ENCODE measurements at regions of chr6 and their contacts with region 1.

Region 1: DNA sequence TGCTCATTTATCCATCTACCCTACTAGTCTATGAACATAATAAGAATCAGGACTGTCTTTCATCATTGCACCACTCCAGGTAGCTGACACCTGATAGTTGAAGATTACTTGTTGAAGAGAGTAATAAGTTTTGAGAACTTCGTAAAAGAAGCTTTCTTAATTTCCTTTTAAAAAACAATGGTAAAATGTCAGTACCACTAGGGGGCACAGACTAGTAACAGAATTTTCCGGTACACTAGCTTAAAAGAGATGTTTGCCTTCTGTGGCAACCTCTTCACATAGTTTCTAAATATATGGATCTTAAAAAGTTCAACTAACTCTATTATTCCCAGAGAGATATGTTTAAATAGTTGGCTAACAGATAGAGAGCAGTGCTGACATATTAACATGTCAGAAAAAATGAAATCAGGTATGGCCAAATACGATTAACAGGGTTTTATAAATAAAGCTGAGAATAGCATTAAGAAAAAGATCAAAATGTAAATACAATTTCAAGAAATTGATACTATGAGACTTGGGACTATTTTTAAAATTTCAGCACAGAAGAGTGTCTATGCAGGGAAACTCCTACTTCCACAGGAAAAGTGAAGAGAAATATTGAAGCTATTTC is 5.4 kb upstream of the KCNQ5 start:
- DNase-seq: peak; percentile 62
- ATAC-seq: no peak
- H3K4me3 ChIP-seq: no peak overlapping the region
- H3K4me3 Mint-ChIP-seq: no peak overlapping the region
- H3K27ac ChIP-seq: no peak overlapping the region
- H3K27ac Mint-ChIP-seq: no peak overlapping the region
- H3K4me1 ChIP-seq: peaks cover 11 to 17% of the 10 kb centered on the region in 2 donors
- H3K4me1 Mint-ChIP-seq: peaks cover 22% of the 10 kb centered on the region
- H3K27me3 ChIP-seq: no peaks in the 10 kb centered on the region
- H3K27me3 Mint-ChIP-seq: no peaks in the 10 kb centered on the region
- CTCF ChIP-seq: peak; percentile 87

Region 2: DNA sequence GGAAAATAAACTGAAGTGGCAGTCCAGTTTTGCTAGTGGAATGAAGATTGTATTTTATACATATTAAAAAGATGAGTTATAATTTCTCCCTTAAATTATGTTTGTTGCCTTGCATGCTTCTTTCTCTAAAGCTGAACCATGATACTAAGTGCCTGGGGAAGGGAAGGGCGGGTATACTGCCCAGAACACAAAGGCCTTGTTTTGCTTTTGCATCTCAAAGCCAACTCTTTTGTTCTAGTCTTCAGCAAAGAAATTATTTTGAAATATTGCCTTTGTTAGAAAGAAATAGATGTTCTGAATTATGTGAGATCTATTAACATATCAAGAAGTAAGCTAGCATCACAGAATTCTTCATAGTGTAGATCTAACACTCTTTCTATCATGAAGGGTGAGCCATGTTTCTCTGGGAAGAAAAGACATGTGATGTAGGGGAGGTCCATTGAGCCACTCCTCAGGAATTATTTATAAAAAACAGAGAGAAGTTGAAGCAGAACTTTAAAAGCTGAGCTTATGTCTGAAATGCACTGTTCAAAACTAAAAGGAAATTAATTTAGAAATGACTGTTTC is 621.7 kb before region 1 on chr6:
- CTCF ChIA-PET with region 1: no interaction called
- POLR2A ChIA-PET with region 1: no interaction called
- intact Hi-C with region 1: no loop called
- DNase-seq: no peak
- ATAC-seq: no peak
- H3K4me3 ChIP-seq: no peak overlapping the region
- H3K4me3 Mint-ChIP-seq: no peak overlapping the region
- H3K27ac ChIP-seq: no peak overlapping the region
- H3K27ac Mint-ChIP-seq: no peak overlapping the region
- H3K4me1 ChIP-seq: no peaks in the 10 kb centered on the region
- H3K4me1 Mint-ChIP-seq: no peaks in the 10 kb centered on the region
- H3K27me3 ChIP-seq: no peaks in the 10 kb centered on the region
- H3K27me3 Mint-ChIP-seq: no peaks in the 10 kb centered on the region
- CTCF ChIP-seq: no peak

Region 3: DNA sequence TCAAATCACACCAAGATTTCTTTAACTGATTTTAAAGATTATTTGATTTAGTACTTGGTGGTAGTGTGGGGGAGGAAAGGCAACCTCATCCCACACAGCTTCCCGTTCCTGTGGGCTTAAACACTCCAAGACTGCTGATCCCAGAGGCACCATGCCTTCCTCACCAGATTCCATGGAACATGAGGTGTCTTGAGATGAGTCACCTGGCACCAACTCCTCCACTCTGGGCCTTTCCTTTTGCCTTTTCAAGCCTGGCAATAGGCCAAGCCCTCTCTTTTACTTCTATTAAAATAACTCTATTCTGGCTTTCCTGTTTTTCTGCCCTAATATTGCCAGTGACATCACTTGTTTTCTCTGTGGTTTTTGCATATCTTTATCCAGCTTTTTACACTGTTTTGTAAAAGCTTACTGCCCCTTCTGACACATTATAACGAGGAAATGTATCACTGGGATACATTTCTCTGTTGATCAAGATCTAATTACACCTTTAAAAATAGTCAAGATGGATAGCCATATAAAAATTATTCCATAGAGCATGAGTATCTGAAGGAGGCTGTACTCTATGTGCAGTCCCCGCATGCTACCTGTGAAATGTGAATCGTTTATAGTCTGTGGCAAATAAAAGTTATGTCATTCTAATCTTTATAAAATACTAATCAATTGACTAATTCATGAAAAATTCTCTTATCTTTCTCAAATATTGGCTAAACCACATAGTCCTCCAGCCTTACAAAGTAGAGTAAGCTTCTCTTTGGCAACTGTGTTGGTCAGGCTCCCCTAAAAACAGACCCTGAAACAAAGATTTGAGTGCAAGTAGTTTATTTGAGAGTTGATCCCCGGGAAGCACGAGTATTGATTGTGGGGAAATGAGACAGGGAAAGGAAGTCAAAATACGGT is 252.4 kb before region 1 on chr6:
- CTCF ChIA-PET with region 1: no interaction called
- POLR2A ChIA-PET with region 1: no interaction called
- intact Hi-C with region 1: no loop called
- DNase-seq: no peak
- ATAC-seq: no peak
- H3K4me3 ChIP-seq: no peak overlapping the region
- H3K4me3 Mint-ChIP-seq: no peak overlapping the region
- H3K27ac ChIP-seq: no peak overlapping the region
- H3K27ac Mint-ChIP-seq: no peak overlapping the region
- H3K4me1 ChIP-seq: no peaks in the 10 kb centered on the region
- H3K4me1 Mint-ChIP-seq: peaks cover 4% of the 10 kb centered on the region
- H3K27me3 ChIP-seq: peaks cover 0 to 4% (median 1%) of the 10 kb centered on the region in 4 experiments
- H3K27me3 Mint-ChIP-seq: peaks cover 15% of the 10 kb centered on the region
- CTCF ChIP-seq: no peak

Region 4: GRCh38 chr6:72560721-72561593 is 55.6 kb before region 1 on chr6:
- CTCF ChIA-PET with region 1: no interaction called
- POLR2A ChIA-PET with region 1: no interaction called
- intact Hi-C with region 1: no loop called
- DNase-seq: no peak
- ATAC-seq: no peak
- H3K4me3 ChIP-seq: no peak overlapping the region
- H3K4me3 Mint-ChIP-seq: no peak overlapping the region
- H3K27ac ChIP-seq: no peak overlapping the region
- H3K27ac Mint-ChIP-seq: no peak overlapping the region
- H3K4me1 ChIP-seq: no peaks in the 10 kb centered on the region
- H3K4me1 Mint-ChIP-seq: no peaks in the 10 kb centered on the region
- H3K27me3 ChIP-seq: peaks cover 0 to 8% (median 0%) of the 10 kb centered on the region in 4 experiments
- H3K27me3 Mint-ChIP-seq: peaks cover 11% of the 10 kb centered on the region
- CTCF ChIP-seq: peak; percentile 25

Region 5: DNA sequence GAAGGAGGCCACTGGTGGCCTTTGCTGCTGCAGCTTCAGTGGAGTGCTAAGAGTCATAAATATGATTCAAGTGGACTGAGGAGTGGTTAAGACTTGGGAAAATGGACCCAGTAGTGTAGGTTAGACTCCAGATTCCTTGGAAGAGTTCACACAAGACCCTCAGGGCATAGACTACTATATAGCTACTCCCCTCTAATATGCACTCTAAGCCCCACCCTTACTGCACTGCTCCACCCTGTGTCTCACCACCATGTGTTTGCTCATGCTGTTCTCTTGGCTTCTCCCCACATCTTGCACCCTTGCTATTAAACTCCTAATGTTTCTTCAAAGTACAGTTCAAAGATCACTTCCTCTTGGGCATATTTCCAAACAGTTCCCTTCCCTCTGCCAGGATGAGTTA is 11.0 kb after region 1 on chr6:
- CTCF ChIA-PET with region 1: interaction called, 10 read pairs
- POLR2A ChIA-PET with region 1: no interaction called
- intact Hi-C with region 1: no loop called
- DNase-seq: no peak
- ATAC-seq: no peak
- H3K4me3 ChIP-seq: no peak overlapping the region
- H3K4me3 Mint-ChIP-seq: no peak overlapping the region
- H3K27ac ChIP-seq: no peak overlapping the region
- H3K27ac Mint-ChIP-seq: no peak overlapping the region
- H3K4me1 ChIP-seq: peaks cover 16 to 23% of the 10 kb centered on the region in 2 donors
- H3K4me1 Mint-ChIP-seq: peaks cover 28% of the 10 kb centered on the region
- H3K27me3 ChIP-seq: no peaks in the 10 kb centered on the region
- H3K27me3 Mint-ChIP-seq: no peaks in the 10 kb centered on the region
- CTCF ChIP-seq: no peak

Region 6: DNA sequence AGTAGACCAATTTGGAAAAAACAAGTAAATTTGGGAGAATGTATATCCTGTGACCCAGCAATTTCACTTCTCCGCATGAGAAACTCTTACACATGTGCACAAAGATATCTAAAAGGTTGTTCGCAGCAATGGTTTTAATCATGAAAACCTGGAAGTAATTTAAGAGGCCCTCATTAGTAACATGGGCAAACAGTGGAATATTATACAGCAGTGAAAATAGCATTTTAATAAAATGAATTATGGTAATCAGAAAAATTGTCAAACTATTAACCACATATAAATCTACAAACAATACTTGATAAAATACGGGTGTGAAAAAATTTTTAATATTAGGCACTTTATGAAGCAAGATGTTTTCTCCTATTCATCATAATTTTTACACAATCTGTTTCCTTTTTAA is 79.5 kb after region 1 on chr6:
- CTCF ChIA-PET with region 1: interaction called, 20 read pairs
- POLR2A ChIA-PET with region 1: no interaction called
- intact Hi-C with region 1: no loop called
- DNase-seq: no peak
- ATAC-seq: no peak
- H3K4me3 ChIP-seq: no peak overlapping the region
- H3K4me3 Mint-ChIP-seq: no peak overlapping the region
- H3K27ac ChIP-seq: no peak overlapping the region
- H3K27ac Mint-ChIP-seq: no peak overlapping the region
- H3K4me1 ChIP-seq: no peaks in the 10 kb centered on the region
- H3K4me1 Mint-ChIP-seq: no peaks in the 10 kb centered on the region
- H3K27me3 ChIP-seq: no peaks in the 10 kb centered on the region
- H3K27me3 Mint-ChIP-seq: no peaks in the 10 kb centered on the region
- CTCF ChIP-seq: no peak

Region 7: GRCh38 chr6:73129653-73130443 is 513.3 kb after region 1 on chr6:
- CTCF ChIA-PET with region 1: interaction called, 586 read pairs
- POLR2A ChIA-PET with region 1: interaction called, 3 read pairs
- intact Hi-C with region 1: loop called (anchors 1 kb)
- DNase-seq: peak; percentile 82
- ATAC-seq: peak; percentile 93
- H3K4me3 ChIP-seq: peak overlapping the region in 3 of 5 experiments; percentile 3 to 36 (median 25)
- H3K4me3 Mint-ChIP-seq: peak overlapping the region; percentile 61
- H3K27ac ChIP-seq: no peak overlapping the region
- H3K27ac Mint-ChIP-seq: no peak overlapping the region
- H3K4me1 ChIP-seq: peaks cover 3 to 6% of the 10 kb centered on the region in 2 donors
- H3K4me1 Mint-ChIP-seq: peaks cover 7% of the 10 kb centered on the region
- H3K27me3 ChIP-seq: no peaks in the 10 kb centered on the region
- H3K27me3 Mint-ChIP-seq: no peaks in the 10 kb centered on the region
- CTCF ChIP-seq: peak; percentile 100

Region 8: GRCh38 chr6:73329201-73329600 is 712.7 kb after region 1 on chr6:
- CTCF ChIA-PET with region 1: interaction called, 28 read pairs
- POLR2A ChIA-PET with region 1: no interaction called
- intact Hi-C with region 1: loop called (anchors 1 kb)
- DNase-seq: no peak
- ATAC-seq: no peak
- H3K4me3 ChIP-seq: no peak overlapping the region
- H3K4me3 Mint-ChIP-seq: no peak overlapping the region
- H3K27ac ChIP-seq: no peak overlapping the region
- H3K27ac Mint-ChIP-seq: no peak overlapping the region
- H3K4me1 ChIP-seq: no peaks in the 10 kb centered on the region
- H3K4me1 Mint-ChIP-seq: no peaks in the 10 kb centered on the region
- H3K27me3 ChIP-seq: peaks cover 0 to 6% (median 0%) of the 10 kb centered on the region in 4 experiments
- H3K27me3 Mint-ChIP-seq: peaks cover 39% of the 10 kb centered on the region
- CTCF ChIP-seq: no peak